ENCODE measurements at regions of chr1 and their contacts with region 1.

Region 1: GRCh38 chr1:89762779-89763648 is 57.8 kb upstream of the LRRC8D start:
- DNase-seq: peak; percentile 58 to 90
- H3K4me3 ChIP-seq: peak overlapping the region; percentile 34 to 71 (median 60); a peak in 7 of 8 replicates
- H3K27ac ChIP-seq: no peak overlapping the region
- H3K4me1 ChIP-seq: peaks cover 0 to 4% (median 3%) of the 10 kb centered on the region in 4 experiments; a peak in 3 of 7 replicates
- H3K27me3 ChIP-seq: peaks cover 0 to 17% (median 16%) of the 10 kb centered on the region in 4 experiments; a peak in 6 of 7 replicates
- CTCF ChIP-seq: peak; percentile 92 to 99 (median 98)
- EP300 ChIP-seq: peak in 1 of 2 experiments; percentile 11; a peak in 1 of 3 replicates
- POLR2A ChIP-seq: no peak
- RAD21 ChIP-seq: peak; percentile 94 to 97

Region 2: GRCh38 chr1:89167590-89168230 is 595.3 kb before region 1 on chr1:
- CTCF ChIA-PET with region 1: no interaction called
- POLR2A ChIA-PET with region 1: no interaction called
- DNase-seq: no peak
- H3K4me3 ChIP-seq: no peak overlapping the region
- H3K27ac ChIP-seq: no peak overlapping the region
- H3K4me1 ChIP-seq: no peaks in the 10 kb centered on the region
- H3K27me3 ChIP-seq: no peaks in the 10 kb centered on the region
- CTCF ChIP-seq: no peak
- EP300 ChIP-seq: no peak
- POLR2A ChIP-seq: no peak
- RAD21 ChIP-seq: no peak

Region 3: DNA sequence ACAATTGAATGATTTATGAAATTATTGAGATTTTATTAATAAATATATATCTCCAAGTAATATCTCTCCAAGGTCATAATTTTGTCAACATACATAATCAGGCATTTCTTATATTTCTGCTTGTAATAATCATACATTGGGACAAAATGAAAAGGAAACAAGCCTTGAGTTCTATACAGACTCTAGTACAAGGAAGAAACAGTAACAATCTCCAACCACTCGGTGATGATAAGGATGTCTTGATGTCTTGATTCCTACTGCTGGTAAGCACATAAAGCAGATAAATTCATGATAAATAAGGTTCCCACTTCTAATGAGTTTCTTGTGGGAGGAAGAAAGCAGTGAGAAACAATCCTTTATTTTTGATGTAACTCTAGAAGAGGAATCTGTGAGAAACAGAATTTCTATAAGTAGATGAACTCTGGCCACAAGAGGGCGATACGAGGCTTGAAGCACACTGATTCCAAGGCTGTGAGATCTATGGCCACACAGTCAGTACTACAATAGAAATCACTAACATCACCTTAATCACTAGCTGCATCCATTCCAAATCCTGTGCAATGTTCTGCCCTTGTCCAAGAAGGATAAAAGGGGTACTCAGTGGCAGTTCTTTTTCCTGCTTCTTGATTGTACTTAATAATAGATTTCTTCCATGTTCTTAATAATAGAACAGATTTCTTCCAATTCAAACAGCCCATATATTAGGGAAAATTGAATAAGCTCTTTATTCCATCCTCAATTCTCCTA is 279.8 kb before region 1 on chr1:
- CTCF ChIA-PET with region 1: interaction called, 33 read pairs
- POLR2A ChIA-PET with region 1: no interaction called
- DNase-seq: peak; percentile 3 to 77
- H3K4me3 ChIP-seq: no peak overlapping the region
- H3K27ac ChIP-seq: no peak overlapping the region
- H3K4me1 ChIP-seq: no peaks in the 10 kb centered on the region
- H3K27me3 ChIP-seq: no peaks in the 10 kb centered on the region
- CTCF ChIP-seq: peak in 2 of 3 experiments; percentile 63 to 74; a peak in 3 of 4 replicates
- EP300 ChIP-seq: no peak
- POLR2A ChIP-seq: no peak
- RAD21 ChIP-seq: peak; percentile 74 to 77

Region 4: DNA sequence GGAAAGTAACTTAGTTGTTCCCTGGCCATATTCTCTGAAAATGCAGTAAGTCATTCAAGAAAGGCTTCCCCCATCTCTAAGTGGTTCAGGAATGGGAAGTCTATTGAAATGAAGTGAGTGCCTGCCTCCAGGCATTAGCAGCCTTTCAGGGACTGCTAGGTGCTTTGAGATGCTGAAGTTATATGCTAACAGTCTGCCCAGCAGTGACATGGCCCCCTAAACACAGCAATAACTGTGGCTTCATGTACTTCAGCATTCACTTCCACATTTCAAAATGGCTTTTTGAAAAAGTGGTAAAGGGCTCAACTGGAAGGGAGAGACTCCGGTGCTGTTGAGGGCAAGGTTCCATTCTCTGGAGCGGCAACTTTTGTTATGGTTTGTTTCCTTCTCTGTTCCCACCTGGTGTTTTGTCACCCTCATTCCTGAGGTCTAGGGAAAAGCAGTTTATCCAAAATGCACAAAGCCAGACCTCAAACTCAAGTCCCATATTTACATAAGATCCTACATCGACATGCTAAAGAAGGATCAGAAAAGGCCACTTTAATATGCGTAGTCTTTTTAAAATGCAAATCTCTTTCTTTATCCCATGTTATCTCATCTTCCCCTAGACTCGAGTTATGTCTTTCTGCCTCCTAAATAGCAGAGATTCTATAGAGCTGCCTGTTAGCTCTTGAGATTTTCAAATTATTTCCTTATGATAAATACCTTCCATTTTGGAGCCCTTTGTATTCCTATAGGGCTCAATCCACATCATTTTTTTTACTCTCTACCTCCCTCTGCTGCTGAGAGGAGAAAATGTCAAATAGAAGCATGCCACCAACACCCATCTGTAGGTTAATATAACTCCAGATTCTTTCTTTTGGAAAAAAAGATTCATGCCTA is 164.3 kb before region 1 on chr1:
- CTCF ChIA-PET with region 1: interaction called, 24 read pairs
- POLR2A ChIA-PET with region 1: no interaction called
- DNase-seq: peak in 1 of 2 experiments; percentile 52
- H3K4me3 ChIP-seq: peak overlapping the region in 1 of 4 experiments; percentile 36; a peak in 2 of 8 replicates
- H3K27ac ChIP-seq: peak overlapping the region; percentile 39; the same call in 1 of the 2 replicates
- H3K4me1 ChIP-seq: peaks cover 2 to 16% (median 10%) of the 10 kb centered on the region in 4 experiments; a peak in 6 of 7 replicates
- H3K27me3 ChIP-seq: no peaks in the 10 kb centered on the region; a peak in 1 of 7 replicates
- CTCF ChIP-seq: peak in 2 of 3 experiments; percentile 36 to 52; a peak in 2 of 4 replicates
- EP300 ChIP-seq: no peak
- POLR2A ChIP-seq: no peak
- RAD21 ChIP-seq: peak; percentile 51 to 52

Region 5: DNA sequence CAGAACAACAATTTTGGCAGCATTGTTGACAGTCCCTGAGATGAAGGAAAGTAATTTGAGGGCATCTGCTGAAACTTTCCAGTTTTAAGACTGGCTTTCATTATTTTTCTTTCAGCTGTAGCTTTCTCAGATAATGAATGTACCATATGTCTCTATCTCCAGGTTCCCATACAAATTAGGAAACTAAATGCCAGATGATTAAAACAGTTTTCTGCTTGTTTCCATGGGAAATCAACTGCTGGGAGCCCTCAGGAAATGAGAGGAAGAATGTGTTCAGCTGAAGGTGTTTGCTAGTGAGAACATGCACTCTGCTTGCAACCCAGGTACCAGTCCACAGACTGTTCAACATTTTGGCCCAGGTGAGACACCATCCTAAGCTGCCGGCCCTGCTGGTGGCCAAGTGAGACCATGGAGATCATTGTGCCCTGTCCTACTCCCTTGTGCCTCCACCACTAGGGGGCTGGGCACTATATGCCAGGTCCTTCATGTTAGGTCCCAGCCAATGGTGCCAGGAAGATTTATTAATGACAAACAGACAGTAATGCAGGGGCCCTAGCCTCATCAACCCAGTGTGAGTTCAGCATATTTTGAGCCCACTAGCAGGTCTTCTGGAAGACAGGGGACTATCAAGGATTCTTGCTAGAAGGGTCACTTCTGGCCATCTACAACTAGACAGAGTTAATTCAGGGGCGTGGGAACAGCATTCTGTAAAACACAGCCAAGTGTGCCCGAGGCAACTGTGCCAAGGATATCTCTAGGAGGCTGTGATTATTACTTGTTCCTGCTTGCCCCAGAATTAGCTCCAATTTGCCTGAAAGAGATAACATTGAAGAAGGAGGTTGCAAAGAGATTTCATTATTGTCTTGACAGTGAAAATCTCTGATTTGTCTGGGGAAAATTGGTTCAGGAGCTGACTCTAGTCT is 147.1 kb before region 1 on chr1:
- CTCF ChIA-PET with region 1: interaction called, 22 read pairs
- POLR2A ChIA-PET with region 1: no interaction called
- DNase-seq: no peak
- H3K4me3 ChIP-seq: no peak overlapping the region
- H3K27ac ChIP-seq: no peak overlapping the region
- H3K4me1 ChIP-seq: no peaks in the 10 kb centered on the region
- H3K27me3 ChIP-seq: no peaks in the 10 kb centered on the region; a peak in 1 of 7 replicates
- CTCF ChIP-seq: peak; percentile 33 to 63 (median 61); a peak in 3 of 4 replicates
- EP300 ChIP-seq: no peak
- POLR2A ChIP-seq: no peak
- RAD21 ChIP-seq: peak; percentile 7 to 26; a peak in 1 of 4 replicates

Region 6: DNA sequence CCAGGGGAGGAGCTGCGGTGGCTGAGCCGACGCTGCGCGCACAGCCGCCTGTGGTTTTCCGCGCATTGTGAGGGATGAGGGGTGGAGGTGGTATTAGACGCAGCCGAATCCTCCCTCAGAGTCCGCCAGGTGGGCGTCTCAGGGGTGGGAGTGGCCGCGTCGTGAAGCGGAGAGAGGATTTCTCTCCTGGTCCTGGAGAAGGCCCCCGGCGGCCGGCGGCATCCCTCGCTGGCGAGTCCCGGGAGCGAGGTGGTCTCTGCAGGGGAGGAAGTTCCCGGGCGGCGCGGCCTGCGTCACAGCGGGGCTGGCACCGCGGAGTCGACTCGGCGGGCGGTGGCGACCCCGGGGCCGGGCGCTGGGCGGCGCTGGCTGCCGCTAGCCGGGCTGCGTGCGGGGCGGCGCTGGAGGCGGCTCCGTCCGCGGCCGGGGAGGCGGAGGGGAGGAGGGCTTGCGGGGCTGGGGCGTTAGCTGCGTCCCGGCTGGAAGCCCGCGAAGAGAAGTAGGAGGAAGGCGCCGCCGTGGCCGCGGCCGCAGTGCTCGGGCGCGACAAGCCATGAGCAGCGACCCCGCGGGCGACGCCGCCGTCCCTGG is 130.3 kb before region 1 on chr1 and contains the start of gene LRRC8C:
- CTCF ChIA-PET with region 1: interaction called, 101 read pairs
- POLR2A ChIA-PET with region 1: interaction called, 4 read pairs
- DNase-seq: peak in 1 of 2 experiments; percentile 87
- H3K4me3 ChIP-seq: peak within 1 kb of the TSS; percentile 57 to 74 (median 72)
- H3K27ac ChIP-seq: no peak within 1 kb of the TSS
- H3K4me1 ChIP-seq: peaks cover 0 to 10% (median 7%) of the 10 kb centered on the region in 4 experiments; a peak in 5 of 7 replicates
- H3K27me3 ChIP-seq: peaks cover 0 to 23% (median 18%) of the 10 kb centered on the region in 4 experiments; a peak in 5 of 7 replicates
- CTCF ChIP-seq: peak; percentile 41 to 51 (median 44); a peak in 3 of 4 replicates
- EP300 ChIP-seq: no peak
- POLR2A ChIP-seq: no peak
- RAD21 ChIP-seq: peak; percentile 18 to 63; a peak in 3 of 4 replicates
- total RNA-seq, gene LRRC8C: 2.1 and 2.5 TPM in 2 replicates

Region 7: DNA sequence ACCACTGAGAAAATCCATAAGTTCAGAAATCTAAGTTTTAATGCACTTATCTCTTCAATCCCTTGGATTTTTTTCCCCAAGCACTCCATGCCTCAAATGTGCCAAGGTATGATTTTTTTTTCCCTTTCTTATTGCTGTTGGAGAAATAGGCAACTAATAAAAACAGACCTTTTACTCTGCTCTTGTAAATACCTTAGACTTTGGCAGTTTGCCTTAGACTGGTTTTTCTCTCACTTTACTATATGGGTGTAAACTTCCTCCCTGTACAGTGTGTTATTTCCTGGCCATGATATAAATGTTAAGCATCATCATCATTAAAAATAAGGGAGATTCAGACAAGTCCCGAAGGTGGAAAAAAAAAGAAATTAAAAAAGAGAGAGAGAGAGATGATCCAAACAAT is 64.4 kb before region 1 on chr1:
- CTCF ChIA-PET with region 1: interaction called, 19 read pairs
- POLR2A ChIA-PET with region 1: no interaction called
- DNase-seq: no peak
- H3K4me3 ChIP-seq: no peak overlapping the region
- H3K27ac ChIP-seq: no peak overlapping the region
- H3K4me1 ChIP-seq: no peaks in the 10 kb centered on the region
- H3K27me3 ChIP-seq: no peaks in the 10 kb centered on the region
- CTCF ChIP-seq: no peak
- EP300 ChIP-seq: no peak
- POLR2A ChIP-seq: no peak
- RAD21 ChIP-seq: no peak

Region 8: DNA sequence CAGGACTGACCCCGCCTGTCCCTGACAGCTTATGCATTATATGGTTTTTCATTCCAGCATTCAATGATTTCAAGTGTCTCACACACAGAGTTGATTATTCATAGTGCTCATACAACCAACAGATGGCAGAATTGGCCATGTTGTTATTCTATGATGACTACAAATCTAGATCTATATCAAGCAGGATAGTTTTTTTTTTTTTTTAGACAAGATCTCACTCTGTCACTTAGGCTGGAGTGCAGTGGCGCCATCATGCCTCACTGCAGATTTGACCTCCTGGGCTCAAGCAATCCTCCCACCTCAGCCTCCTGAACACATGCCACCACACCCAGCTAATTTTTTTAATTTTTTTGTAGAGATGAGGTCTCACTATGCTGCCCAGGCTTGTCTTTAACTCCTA is 17.7 kb after region 1 on chr1:
- CTCF ChIA-PET with region 1: interaction called, 29 read pairs
- POLR2A ChIA-PET with region 1: no interaction called
- DNase-seq: no peak
- H3K4me3 ChIP-seq: no peak overlapping the region
- H3K27ac ChIP-seq: no peak overlapping the region
- H3K4me1 ChIP-seq: no peaks in the 10 kb centered on the region
- H3K27me3 ChIP-seq: no peaks in the 10 kb centered on the region
- CTCF ChIP-seq: peak in 1 of 3 experiments; percentile 7; a peak in 2 of 4 replicates
- EP300 ChIP-seq: no peak
- POLR2A ChIP-seq: no peak
- RAD21 ChIP-seq: peak; percentile 48

Region 9: GRCh38 chr1:89855413-89856123 is 92.6 kb after region 1 on chr1:
- CTCF ChIA-PET with region 1: no interaction called
- POLR2A ChIA-PET with region 1: no interaction called
- DNase-seq: no peak
- H3K4me3 ChIP-seq: no peak overlapping the region
- H3K27ac ChIP-seq: no peak overlapping the region
- H3K4me1 ChIP-seq: no peaks in the 10 kb centered on the region
- H3K27me3 ChIP-seq: no peaks in the 10 kb centered on the region
- CTCF ChIP-seq: no peak
- EP300 ChIP-seq: no peak
- POLR2A ChIP-seq: no peak
- RAD21 ChIP-seq: no peak

Region 10: DNA sequence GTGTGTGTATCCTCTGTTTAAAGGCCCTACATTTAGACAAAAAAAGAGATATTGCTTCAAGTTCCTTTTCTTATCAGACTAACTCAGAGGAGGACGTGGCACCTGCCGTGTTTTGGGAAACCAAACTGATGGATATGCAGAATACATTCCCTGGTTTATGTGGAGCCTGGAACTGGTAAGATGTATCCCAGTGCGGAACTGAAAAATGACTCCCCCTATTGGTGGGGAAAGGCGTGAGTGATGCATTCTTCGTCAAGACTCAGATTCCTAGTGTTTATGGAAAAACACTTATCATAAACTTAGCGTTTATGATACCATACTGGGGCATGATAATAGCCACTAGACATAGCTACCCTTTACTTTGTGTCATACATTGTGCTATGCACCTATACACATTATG is 386.1 kb after region 1 on chr1:
- CTCF ChIA-PET with region 1: no interaction called
- POLR2A ChIA-PET with region 1: no interaction called
- DNase-seq: peak in 1 of 2 experiments; percentile 61
- H3K4me3 ChIP-seq: no peak overlapping the region
- H3K27ac ChIP-seq: no peak overlapping the region
- H3K4me1 ChIP-seq: no peaks in the 10 kb centered on the region
- H3K27me3 ChIP-seq: no peaks in the 10 kb centered on the region
- CTCF ChIP-seq: peak; percentile 21 to 75 (median 52)
- EP300 ChIP-seq: no peak
- POLR2A ChIP-seq: no peak
- RAD21 ChIP-seq: peak; percentile 53 to 56

Measured in H1 (cell line).